Naive thymus-derived CD8-positive, alpha-beta T cell (primary cell): ENCODE measurements at regions of chr21 and their contacts with region 1.

Region 1: DNA sequence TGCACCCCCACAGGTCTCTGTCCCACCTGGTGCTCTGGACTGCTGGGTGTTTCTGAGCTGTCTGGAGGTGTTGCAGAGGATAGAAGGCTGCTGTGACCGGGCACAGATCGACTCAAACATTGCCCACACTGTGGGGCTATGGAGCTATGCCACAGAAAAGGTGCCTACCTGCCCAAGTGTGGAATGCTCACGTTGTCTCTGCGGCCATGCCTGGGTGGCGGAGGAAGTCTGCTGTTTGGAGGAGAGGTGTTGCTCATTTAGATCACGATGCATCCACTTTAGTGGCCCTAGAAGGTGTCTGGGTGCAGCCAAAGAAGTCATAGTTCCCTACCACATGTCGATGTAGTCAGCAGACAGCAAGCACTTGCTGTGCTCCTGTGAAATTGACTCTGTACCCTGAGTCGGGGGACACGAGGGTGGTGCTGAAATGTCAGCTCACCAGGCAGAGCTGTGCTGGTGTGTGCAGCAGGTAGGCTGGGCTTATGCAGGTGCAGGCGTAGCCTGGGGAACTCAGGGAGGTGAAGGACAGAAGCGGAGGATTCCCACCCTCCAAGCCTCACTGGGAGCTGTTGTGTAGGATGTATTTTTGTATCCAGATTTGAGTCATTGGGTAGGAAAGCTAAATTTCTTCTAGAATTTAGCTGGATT is 32.8 kb upstream of the PWP2 start:
- DNase-seq: peak in 8 of 10 donors; percentile 15 to 72 (median 55)
- ATAC-seq: peak; percentile 92 to 93
- H3K4me3 Mint-ChIP-seq: peak overlapping the region in 6 of 10 donors; percentile 24 to 55 (median 48)
- H3K27ac Mint-ChIP-seq: peak overlapping the region; percentile 34 to 94 (median 84)
- H3K4me1 Mint-ChIP-seq: peaks cover 17 to 41% (median 29%) of the 10 kb centered on the region in 4 donors
- H3K27me3 Mint-ChIP-seq: no peaks in the 10 kb centered on the region

Region 2: DNA sequence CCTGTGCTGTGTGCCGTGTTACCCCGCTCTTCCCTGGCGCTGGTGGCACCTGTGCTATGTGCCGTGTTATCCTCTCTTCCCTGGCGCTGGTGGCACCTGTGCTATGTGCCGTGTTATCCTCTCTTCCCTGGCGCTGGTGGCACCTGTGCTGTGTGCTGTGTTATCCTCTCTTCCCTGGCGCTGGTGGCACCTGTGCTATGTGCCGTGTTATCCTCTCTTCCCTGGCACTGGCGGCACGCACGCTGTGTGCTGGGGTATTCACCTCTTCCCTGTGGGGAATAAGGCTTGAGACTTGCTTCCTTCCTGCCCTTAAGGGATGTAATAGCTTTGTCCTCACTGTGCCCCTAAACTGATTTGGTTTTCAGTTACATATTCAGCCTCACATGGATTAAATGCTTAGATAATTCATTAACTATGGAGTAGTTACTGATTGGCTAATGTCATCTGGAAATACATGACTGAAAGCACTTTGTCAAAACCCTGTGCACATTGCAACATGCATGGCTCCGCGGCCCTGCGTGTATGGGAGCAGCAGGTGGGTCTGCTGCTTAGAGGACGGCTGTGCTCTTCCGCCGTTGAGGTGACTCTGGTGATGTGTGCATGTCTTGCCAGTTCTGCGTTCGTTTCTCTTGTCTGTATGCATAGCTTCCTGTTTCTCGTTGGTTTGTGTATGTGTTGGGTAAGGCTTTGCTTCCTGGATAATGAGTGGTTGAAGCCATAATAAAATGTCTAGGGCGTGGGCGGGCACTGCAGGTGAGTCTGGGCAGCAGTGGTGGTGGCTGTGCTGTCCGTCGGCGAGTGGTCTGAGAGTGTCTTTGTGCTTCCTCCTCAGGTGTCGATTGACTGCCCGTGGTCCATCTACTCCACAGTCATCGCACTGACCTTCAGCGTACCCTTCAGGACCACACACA is 14.8 kb after region 1 on chr21:
- POLR2A ChIA-PET with region 1: interaction called, 19 read pairs
- DNase-seq: peak in 9 of 10 donors; percentile 35 to 77 (median 57)
- ATAC-seq: peak; percentile 85 to 94
- H3K4me3 Mint-ChIP-seq: peak overlapping the region; percentile 58 to 84 (median 76)
- H3K27ac Mint-ChIP-seq: peak overlapping the region; percentile 90 to 99 (median 97)
- H3K4me1 Mint-ChIP-seq: peaks cover 33 to 79% (median 69%) of the 10 kb centered on the region in 4 donors
- H3K27me3 Mint-ChIP-seq: no peaks in the 10 kb centered on the region